Activated naive CD8-positive, alpha-beta T cell treated with anti-CD3 and anti-CD28 coated beads, Interleukin-2, amount 10 ng/mL, durations not matched to agents 7 days and 5 days (primary cell): ENCODE measurements at regions of chr4 and their contacts with region 1.

Region 1: GRCh38 chr4:88456757-88457306 is at the start of gene HERC5:
- DNase-seq: peak; percentile 96
- ATAC-seq: peak; percentile 86
- H3K4me3 Mint-ChIP-seq: peak within 1 kb of the TSS; percentile 97
- H3K27ac Mint-ChIP-seq: peak within 1 kb of the TSS; percentile 99
- H3K4me1 Mint-ChIP-seq: peaks cover 34% of the 10 kb centered on the region
- H3K27me3 Mint-ChIP-seq: no peaks in the 10 kb centered on the region
- total RNA-seq, gene HERC5: 44.8 to 46.5 TPM

Region 2: GRCh38 chr4:88204882-88205281 is 251.9 kb before region 1 on chr4:
- POLR2A ChIA-PET with region 1: no interaction called
- DNase-seq: no peak
- ATAC-seq: no peak
- H3K4me3 Mint-ChIP-seq: no peak overlapping the region
- H3K27ac Mint-ChIP-seq: no peak overlapping the region
- H3K4me1 Mint-ChIP-seq: peaks cover 3% of the 10 kb centered on the region
- H3K27me3 Mint-ChIP-seq: peaks cover 16% of the 10 kb centered on the region

Region 3: DNA sequence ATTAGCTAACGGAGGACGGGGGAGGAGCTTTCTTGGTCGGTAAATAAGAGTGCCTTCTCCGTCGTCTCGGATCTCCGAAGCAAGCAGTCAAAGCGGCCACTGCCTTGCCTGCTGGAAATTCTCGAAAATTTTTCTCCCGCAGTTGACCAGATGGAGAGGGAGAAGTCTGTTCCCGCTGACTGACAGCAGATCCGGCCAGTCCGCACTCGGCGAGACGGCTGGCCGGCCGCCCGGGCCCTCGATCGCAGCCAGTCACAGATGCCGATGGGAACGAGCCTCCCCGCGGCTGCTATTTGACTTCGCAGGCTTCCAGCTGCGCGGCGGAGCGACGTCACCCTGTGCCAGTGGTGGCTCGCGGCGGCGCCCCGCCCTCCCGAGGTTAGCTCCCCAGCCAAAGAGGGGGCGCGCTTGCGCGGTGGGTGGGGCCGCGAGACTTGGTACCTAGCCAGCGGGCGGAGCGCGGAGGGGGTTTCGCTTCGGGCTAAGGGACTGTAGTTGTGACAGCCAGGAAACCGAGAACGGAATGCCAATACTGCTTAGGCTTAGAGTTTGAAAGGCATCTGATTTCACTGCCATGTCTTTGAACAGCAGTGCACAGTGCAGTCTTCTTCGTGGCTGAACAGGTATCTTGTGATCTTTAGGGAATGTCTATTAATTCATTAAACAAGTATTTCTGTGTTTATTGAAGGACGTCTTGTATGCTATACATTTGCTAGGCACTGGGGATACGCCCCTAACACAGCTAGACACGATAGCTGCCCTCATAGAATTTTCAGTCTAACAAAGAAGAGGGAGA is 172.2 kb before region 1 on chr4 and contains the start of gene PPM1K:
- POLR2A ChIA-PET with region 1: interaction called, 67 read pairs
- DNase-seq: peak; percentile 99
- ATAC-seq: peak; percentile 91
- H3K4me3 Mint-ChIP-seq: peak within 1 kb of the TSS; percentile 95
- H3K27ac Mint-ChIP-seq: peak within 1 kb of the TSS; percentile 92
- H3K4me1 Mint-ChIP-seq: peaks cover 31% of the 10 kb centered on the region
- H3K27me3 Mint-ChIP-seq: no peaks in the 10 kb centered on the region
- total RNA-seq, gene PPM1K: 81.4 to 82.7 TPM

Region 4: DNA sequence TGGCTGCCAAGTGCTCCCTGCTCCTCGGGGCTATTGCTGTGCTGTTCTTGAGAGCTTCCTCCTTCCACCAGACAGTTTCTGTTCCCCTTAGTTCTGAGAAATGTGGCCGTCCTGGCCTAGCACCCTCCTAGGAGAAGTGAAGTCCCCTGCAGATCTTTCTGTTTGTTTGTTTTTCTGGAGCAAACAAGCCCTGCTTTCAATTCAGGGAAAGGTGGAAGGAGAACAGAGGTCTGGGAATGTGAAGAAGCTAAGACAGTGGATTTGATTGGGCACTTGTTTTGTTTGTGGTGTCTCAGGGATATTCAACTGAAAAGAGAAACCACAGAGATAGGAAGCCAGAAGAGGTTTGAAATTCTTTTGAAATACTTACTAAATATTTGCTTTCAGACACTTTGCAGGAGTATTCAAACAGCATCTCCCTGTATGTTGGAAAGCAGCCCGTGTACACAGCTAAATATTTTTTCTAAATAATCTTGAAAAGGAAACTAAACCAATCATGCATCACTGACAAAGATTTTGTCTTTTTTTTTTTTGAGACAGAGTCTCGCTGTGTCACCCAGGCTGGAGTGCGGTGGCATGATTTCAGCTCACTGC is 136.0 kb before region 1 on chr4:
- POLR2A ChIA-PET with region 1: interaction called, 31 read pairs
- DNase-seq: peak; percentile 54
- ATAC-seq: peak; percentile 95
- H3K4me3 Mint-ChIP-seq: peak overlapping the region; percentile 88
- H3K27ac Mint-ChIP-seq: peak overlapping the region; percentile 98
- H3K4me1 Mint-ChIP-seq: peaks cover 23% of the 10 kb centered on the region
- H3K27me3 Mint-ChIP-seq: no peaks in the 10 kb centered on the region

Region 5: DNA sequence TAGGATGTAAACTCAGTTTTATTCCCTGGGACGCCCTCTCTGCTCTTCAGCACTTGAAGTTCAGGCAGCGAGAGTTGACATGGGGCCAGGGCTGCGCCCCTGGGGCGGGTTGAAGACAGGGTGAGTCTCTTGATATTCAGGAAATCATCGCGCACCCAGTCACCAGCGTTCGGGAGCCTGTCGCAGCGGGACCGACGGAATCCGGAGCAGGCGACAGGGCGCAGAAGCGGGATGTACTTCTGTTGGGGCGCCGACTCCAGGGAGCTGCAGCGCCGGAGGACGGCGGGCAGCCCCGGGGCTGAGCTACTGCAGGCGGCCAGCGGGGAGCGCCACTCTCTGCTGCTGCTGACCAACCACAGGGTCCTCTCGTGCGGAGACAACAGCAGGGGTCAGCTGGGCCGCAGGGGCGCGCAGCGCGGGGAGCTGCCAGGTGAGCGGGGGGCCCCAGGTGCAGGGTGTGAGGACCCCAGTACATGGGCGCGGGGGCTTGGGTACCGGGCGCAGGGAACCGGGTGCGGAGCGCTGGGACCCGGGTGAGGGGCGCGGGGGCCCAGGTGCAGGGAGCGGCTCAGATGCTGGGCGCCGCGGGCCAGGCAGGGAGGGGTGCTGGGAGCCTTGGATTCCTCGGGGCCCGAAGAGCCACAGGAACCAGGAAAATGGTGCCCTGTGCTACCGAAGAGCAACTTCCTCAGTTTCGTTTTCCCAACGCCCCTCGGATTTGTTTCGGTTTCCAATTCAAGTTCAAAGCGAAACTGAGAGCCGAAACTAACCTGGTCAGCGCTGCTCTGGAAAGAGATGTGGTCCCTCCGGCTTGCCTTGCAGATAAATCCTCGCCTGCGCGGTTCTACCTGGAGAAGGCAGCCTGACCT is 77.9 kb before region 1 on chr4 and contains the start of gene HERC6:
- POLR2A ChIA-PET with region 1: interaction called, 45 read pairs
- DNase-seq: peak; percentile 83
- ATAC-seq: peak; percentile 58
- H3K4me3 Mint-ChIP-seq: peak within 1 kb of the TSS; percentile 91
- H3K27ac Mint-ChIP-seq: peak within 1 kb of the TSS; percentile 96
- H3K4me1 Mint-ChIP-seq: peaks cover 48% of the 10 kb centered on the region
- H3K27me3 Mint-ChIP-seq: no peaks in the 10 kb centered on the region
- total RNA-seq, gene HERC6: 36.0 to 36.5 TPM

Region 6: DNA sequence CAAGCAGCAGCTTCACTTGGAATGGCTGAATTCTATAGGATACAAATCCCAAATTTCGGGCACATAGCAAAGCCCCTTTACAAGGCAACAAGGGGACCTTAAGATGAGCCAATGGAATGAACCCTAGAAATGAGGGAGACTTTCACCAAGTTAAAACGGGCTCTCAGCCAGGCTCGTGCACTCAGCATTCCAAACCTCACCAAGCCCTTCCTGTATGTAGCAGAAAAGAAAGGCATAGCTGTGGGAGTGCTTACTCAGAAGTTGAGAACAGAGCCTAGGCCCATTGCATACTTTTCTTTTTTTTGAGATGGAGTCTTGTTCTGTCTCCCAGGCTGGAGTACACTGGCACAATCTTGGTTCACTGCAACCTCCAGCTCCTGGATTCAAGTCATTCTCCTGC is 10.7 kb before region 1 on chr4:
- POLR2A ChIA-PET with region 1: interaction called, 11 read pairs
- DNase-seq: no peak
- ATAC-seq: no peak
- H3K4me3 Mint-ChIP-seq: no peak overlapping the region
- H3K27ac Mint-ChIP-seq: no peak overlapping the region
- H3K4me1 Mint-ChIP-seq: peaks cover 4% of the 10 kb centered on the region
- H3K27me3 Mint-ChIP-seq: no peaks in the 10 kb centered on the region

Region 7: GRCh38 chr4:88477229-88477860 is 20.5 kb after region 1 on chr4:
- POLR2A ChIA-PET with region 1: interaction called, 12 read pairs
- DNase-seq: no peak
- ATAC-seq: no peak
- H3K4me3 Mint-ChIP-seq: no peak overlapping the region
- H3K27ac Mint-ChIP-seq: no peak overlapping the region
- H3K4me1 Mint-ChIP-seq: peaks cover 3% of the 10 kb centered on the region
- H3K27me3 Mint-ChIP-seq: no peaks in the 10 kb centered on the region